MCF 10A (cell line): ENCODE measurements at regions of chr9 and their contacts with region 1.

Region 1: GRCh38 chr9:133375724-133376654 is at the starts of genes STKLD1 and SURF4:
- DNase-seq: peak; percentile 96
- H3K4me3 Mint-ChIP-seq: peak within 1 kb of the TSS; percentile 92
- H3K27ac Mint-ChIP-seq: peak within 1 kb of the TSS; percentile 95
- H3K4me1 Mint-ChIP-seq: peaks cover 28% of the 10 kb centered on the region
- H3K27me3 Mint-ChIP-seq: no peaks in the 10 kb centered on the region
- CTCF ChIP-seq: no peak
- total RNA-seq, gene STKLD1: 1.3 TPM in 2 replicates
- total RNA-seq, gene SURF4: 198 and 226 TPM in 2 replicates

Region 2: GRCh38 chr9:133347985-133348717 is 27.8 kb before region 1 on chr9 and contains the starts of genes MED22 and RPL7A:
- CTCF ChIA-PET with region 1: interaction called, 4 read pairs
- POLR2A ChIA-PET with region 1: interaction called, 29 read pairs
- intact Hi-C with region 1: no loop called
- DNase-seq: peak; percentile 95
- H3K4me3 Mint-ChIP-seq: peak within 1 kb of the TSS; percentile 88
- H3K27ac Mint-ChIP-seq: peak within 1 kb of the TSS; percentile 97
- H3K4me1 Mint-ChIP-seq: peaks cover 6% of the 10 kb centered on the region
- H3K27me3 Mint-ChIP-seq: no peaks in the 10 kb centered on the region
- CTCF ChIP-seq: no peak
- total RNA-seq, gene MED22: 29.3 and 32.6 TPM in 2 replicates
- total RNA-seq, gene RPL7A: 2,129 and 2,395 TPM in 2 replicates

Region 3: DNA sequence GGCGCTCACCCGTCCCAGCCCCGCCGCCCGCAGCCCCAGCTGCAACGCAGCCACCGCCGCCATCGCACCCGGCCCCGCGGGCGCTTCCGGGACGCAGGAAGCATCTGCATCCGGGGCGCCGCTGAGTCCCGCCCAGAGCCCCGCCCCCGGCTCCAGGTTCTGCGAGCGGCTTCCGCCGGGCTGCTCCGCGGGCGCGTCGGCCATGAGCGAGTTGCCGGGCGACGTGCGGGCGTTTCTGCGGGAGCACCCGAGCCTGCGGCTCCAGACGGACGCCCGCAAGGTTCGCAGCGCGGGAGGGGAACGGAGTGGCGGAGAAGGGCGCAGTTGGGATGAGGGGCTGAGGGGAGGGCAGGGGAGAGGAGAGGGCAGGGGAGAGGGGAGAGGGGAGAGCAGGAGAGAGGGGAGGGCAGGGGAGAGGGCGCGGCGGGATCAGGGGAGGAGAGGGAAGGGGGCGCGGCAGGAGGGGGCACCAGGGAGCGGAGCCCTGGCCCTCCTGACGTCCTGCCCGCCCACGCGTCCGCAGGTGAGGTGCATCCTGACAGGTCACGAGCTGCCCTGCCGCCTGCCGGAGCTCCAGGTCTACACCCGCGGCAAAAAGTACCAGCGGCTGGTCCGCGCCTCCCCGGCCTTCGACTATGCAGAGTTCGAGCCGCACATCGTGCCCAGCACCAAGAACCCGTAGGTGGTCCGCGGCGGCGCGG is 19.4 kb before region 1 on chr9 and contains the starts of genes SURF1 and SURF2:
- CTCF ChIA-PET with region 1: interaction called, 5 read pairs
- POLR2A ChIA-PET with region 1: interaction called, 65 read pairs
- intact Hi-C with region 1: no loop called
- DNase-seq: peak; percentile 81
- H3K4me3 Mint-ChIP-seq: peak within 1 kb of the TSS; percentile 78
- H3K27ac Mint-ChIP-seq: peak within 1 kb of the TSS; percentile 74
- H3K4me1 Mint-ChIP-seq: peaks cover 14% of the 10 kb centered on the region
- H3K27me3 Mint-ChIP-seq: no peaks in the 10 kb centered on the region
- CTCF ChIP-seq: no peak
- total RNA-seq, gene SURF1: 30.8 and 31.2 TPM in 2 replicates
- total RNA-seq, gene SURF2: 28.2 and 39.5 TPM in 2 replicates

Region 4: GRCh38 chr9:133362359-133363044 is 13.5 kb before region 1 on chr9:
- CTCF ChIA-PET with region 1: interaction called, 5 read pairs
- POLR2A ChIA-PET with region 1: interaction called, 65 read pairs
- intact Hi-C with region 1: no loop called
- DNase-seq: peak; percentile 36
- H3K4me3 Mint-ChIP-seq: no peak overlapping the region
- H3K27ac Mint-ChIP-seq: no peak overlapping the region
- H3K4me1 Mint-ChIP-seq: peaks cover 18% of the 10 kb centered on the region
- H3K27me3 Mint-ChIP-seq: no peaks in the 10 kb centered on the region
- CTCF ChIP-seq: no peak

Region 5: GRCh38 chr9:133417541-133418461 is 41.8 kb after region 1 on chr9 and contains the start of gene REXO4:
- CTCF ChIA-PET with region 1: interaction called, 5 read pairs
- POLR2A ChIA-PET with region 1: interaction called, 18 read pairs
- intact Hi-C with region 1: no loop called
- DNase-seq: peak; percentile 84
- H3K4me3 Mint-ChIP-seq: peak within 1 kb of the TSS; percentile 90
- H3K27ac Mint-ChIP-seq: peak within 1 kb of the TSS; percentile 70
- H3K4me1 Mint-ChIP-seq: peaks cover 17% of the 10 kb centered on the region
- H3K27me3 Mint-ChIP-seq: no peaks in the 10 kb centered on the region
- CTCF ChIP-seq: no peak
- total RNA-seq, gene REXO4: 26.0 and 38.1 TPM in 2 replicates